ENCODE measurements at regions of chr22 and their contacts with region 1.

Region 1: GRCh38 chr22:50185384-50186087 is at the start of gene TRABD:
- ATAC-seq: peak; percentile 46 to 87 (median 78)
- H3K4me3 ChIP-seq: peak within 1 kb of the TSS; percentile 39 to 50 (median 45)
- H3K27ac ChIP-seq: no peak within 1 kb of the TSS
- H3K4me1 ChIP-seq: peaks cover 7 to 24% of the 10 kb centered on the region in 2 donors
- total RNA-seq, gene TRABD: 8.2 to 37.4 (median 12.5) TPM

Region 2: DNA sequence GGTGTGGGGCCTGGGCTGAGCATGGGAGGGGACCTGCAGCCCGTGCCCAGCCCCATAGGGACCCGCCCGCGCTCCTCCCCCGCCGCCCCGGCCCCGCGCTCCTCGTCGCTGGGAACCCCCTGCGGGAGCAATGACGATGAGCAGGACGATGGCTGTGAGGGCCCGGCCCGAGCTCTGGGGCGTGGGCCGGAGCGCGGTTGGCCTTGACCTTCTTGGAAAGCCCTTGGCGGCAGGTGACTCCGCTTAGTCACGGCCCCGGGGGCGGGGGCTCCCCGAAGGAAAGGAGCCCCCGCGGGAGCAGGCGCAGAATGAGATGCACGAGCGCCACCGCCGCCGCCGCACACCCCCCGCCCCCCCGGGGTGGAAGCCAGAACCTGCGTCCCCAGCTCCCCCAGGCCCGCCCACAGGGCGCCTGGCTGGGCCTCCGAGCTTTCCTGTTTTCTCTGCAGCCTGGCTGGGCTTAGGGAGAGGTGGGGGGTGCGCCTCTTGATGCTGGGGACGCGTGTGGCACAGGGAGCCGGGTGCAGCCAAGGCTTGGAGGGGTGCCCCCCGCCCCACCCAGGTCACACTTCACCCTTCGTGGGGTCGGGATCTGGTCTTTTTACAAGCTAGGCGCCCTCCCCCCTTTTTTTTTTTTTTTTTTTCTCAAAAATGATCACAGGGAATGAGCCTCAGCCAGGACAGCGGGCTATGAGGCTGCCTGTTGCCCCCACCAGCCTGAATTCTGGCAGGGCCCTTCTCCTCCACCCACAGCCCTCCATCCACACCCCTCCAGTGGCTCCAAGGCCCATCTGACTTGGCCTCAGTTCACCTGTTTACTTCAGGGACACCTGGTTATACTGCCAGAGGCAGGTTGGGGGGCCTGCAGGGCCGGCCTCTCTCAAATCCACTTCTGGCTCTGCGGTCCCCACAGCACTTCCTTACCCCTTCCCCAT is 249.3 kb before region 1 on chr22:
- in situ Hi-C with region 1: loop called in 2 of 9 experiments (anchors 25 kb)
- ATAC-seq: peak; percentile 76 to 87 (median 80)
- H3K4me3 ChIP-seq: peak overlapping the region in 4 of 5 donors; percentile 2 to 11 (median 8)
- H3K27ac ChIP-seq: peak overlapping the region; percentile 62 to 75
- H3K4me1 ChIP-seq: peaks cover 45% of the 10 kb centered on the region in 2 donors

Region 3: DNA sequence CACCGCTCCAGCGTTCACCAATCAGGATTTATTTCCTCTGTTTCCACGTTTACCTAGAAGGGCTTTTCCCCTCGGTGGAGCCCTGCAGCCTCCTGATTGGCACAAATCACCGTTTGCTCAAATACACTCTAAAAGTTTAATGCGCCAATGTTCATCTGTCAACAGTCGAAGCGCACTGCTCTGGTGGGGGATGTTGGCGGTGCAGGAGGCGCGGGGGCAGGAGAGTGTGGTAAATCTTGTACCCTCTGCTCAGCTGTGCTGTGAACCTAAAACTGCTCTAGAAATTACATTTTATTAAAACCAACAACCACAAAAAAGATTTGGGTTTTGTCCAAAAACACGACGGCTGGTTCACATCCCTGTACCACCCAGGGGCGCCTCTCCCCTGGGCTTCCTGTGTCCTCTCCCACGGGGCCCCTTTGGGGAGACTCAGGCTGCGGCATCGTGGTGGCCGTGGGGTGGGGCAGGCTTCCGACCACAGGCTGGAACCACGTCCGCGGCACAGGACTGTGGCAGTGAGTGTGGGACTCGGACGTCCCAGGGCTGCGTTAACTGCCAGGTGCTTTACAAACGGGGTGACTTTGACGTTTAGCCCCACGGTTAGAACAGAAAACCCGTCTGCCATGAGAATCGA is 140.9 kb before region 1 on chr22:
- in situ Hi-C with region 1: no loop called
- ATAC-seq: no peak
- H3K4me3 ChIP-seq: no peak overlapping the region
- H3K27ac ChIP-seq: no peak overlapping the region
- H3K4me1 ChIP-seq: no peaks in the 10 kb centered on the region

Region 4: GRCh38 chr22:50315289-50316115 is 130.0 kb after region 1 on chr22:
- in situ Hi-C with region 1: no loop called
- ATAC-seq: no peak
- H3K4me3 ChIP-seq: no peak overlapping the region
- H3K27ac ChIP-seq: no peak overlapping the region
- H3K4me1 ChIP-seq: peaks cover 16 to 18% of the 10 kb centered on the region in 2 donors

Region 5: DNA sequence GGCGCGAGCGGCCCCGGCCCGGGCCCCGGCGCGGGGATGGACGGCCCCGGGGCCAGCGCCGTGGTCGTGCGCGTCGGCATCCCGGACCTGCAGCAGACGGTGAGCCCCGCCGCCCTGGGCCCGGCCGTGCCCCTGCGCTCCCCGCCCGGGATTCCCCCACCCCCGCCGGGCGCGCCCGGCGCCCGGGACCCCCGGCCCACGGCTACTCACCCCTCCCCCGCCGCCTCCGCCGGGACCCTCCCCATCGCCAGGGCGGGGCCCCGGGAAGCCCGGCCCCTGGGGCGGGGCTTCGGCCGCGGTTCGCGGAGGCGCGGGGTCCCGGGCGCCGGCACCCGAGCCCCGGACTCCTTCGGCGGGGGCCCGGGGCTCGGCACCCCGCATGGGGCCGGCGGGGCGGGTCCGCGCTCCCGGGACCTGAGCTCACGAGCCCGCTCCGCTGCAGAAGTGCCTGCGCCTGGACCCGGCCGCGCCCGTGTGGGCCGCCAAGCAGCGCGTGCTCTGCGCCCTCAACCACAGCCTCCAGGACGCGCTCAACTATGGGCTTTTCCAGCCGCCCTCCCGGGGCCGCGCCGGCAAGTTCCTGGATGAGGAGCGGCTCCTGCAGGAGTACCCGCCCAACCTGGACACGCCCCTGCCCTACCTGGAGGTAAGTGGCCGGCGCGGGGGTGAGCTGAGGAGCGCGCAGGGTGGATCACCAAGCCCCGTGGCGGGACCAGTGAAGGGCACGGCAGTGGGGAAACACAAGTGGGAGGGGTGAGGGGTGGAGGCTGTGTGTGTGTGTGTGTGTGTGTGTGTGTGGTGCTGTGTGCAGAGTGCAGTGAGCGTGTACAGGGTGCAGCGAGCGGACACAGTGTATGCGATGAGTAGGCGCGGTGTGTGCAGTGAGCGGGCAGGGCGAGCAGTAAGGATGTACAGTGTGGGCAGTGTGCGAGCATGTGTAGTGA is 489.3 kb after region 1 on chr22:
- in situ Hi-C with region 1: no loop called
- ATAC-seq: peak; percentile 67 to 84 (median 74)
- H3K4me3 ChIP-seq: peak overlapping the region; percentile 51 to 97 (median 64)
- H3K27ac ChIP-seq: peak overlapping the region; percentile 72 to 91
- H3K4me1 ChIP-seq: peaks cover 0 to 6% of the 10 kb centered on the region in 2 donors